Activated CD8-positive, alpha-beta memory T cell treated with anti-CD3 and anti-CD28 coated beads, Interleukin-2, amount 10 ng/mL, durations not matched to agents 7 days and 5 days (primary cell): ENCODE measurements at regions of chr19 and their contacts with region 1.

Region 1: GRCh38 chr19:41811036-41811435 is 14.6 kb downstream of the CEACAM3 start:
- DNase-seq: no peak
- ATAC-seq: no peak
- H3K4me3 Mint-ChIP-seq: no peak overlapping the region
- H3K27ac Mint-ChIP-seq: no peak overlapping the region
- H3K4me1 Mint-ChIP-seq: peaks cover 2% of the 10 kb centered on the region
- H3K27me3 Mint-ChIP-seq: no peaks in the 10 kb centered on the region

Region 2: DNA sequence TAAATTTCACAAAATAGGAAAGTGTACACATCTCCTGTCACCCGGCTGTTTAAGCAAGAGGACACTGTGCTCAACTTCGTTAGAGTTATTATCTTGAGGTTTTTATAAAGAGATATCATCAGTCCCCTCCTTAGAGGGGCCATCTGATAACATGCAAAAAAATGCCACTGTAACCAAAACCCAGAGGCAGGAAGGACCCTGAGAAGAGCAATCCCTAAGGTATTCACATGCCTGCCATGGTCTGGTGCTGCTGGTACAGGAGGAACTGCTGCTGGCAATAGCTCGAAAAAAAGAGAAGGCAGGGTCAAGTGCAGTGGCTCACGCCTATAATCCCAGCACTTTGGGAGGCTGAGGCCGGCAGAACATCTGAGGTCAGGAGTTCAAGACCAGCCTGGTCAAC is 27.4 kb before region 1 on chr19:
- CTCF ChIA-PET with region 1: no interaction called
- DNase-seq: no peak
- ATAC-seq: no peak
- H3K4me3 Mint-ChIP-seq: no peak overlapping the region
- H3K27ac Mint-ChIP-seq: no peak overlapping the region
- H3K4me1 Mint-ChIP-seq: peaks cover 17% of the 10 kb centered on the region
- H3K27me3 Mint-ChIP-seq: peaks cover 61% of the 10 kb centered on the region

Region 3: GRCh38 chr19:41821003-41821735 is 10.1 kb after region 1 on chr19:
- CTCF ChIA-PET with region 1: interaction called, 10 read pairs
- DNase-seq: peak; percentile 56
- ATAC-seq: peak; percentile 78
- H3K4me3 Mint-ChIP-seq: no peak overlapping the region
- H3K27ac Mint-ChIP-seq: no peak overlapping the region
- H3K4me1 Mint-ChIP-seq: peaks cover 3% of the 10 kb centered on the region
- H3K27me3 Mint-ChIP-seq: peaks cover 39% of the 10 kb centered on the region